ENCODE measurements at regions of chr9 and their contacts with region 1.

Region 1: GRCh38 chr9:73116031-73116430 is 35.6 kb upstream of the ANXA1 start:
- DNase-seq: peak; percentile 24
- ATAC-seq: peak; percentile 95
- H3K4me3 Mint-ChIP-seq: no peak overlapping the region
- H3K27ac Mint-ChIP-seq: peak overlapping the region; percentile 0
- H3K4me1 Mint-ChIP-seq: peaks cover 40% of the 10 kb centered on the region
- H3K27me3 Mint-ChIP-seq: no peaks in the 10 kb centered on the region
- CTCF ChIP-seq: no peak

Region 2: DNA sequence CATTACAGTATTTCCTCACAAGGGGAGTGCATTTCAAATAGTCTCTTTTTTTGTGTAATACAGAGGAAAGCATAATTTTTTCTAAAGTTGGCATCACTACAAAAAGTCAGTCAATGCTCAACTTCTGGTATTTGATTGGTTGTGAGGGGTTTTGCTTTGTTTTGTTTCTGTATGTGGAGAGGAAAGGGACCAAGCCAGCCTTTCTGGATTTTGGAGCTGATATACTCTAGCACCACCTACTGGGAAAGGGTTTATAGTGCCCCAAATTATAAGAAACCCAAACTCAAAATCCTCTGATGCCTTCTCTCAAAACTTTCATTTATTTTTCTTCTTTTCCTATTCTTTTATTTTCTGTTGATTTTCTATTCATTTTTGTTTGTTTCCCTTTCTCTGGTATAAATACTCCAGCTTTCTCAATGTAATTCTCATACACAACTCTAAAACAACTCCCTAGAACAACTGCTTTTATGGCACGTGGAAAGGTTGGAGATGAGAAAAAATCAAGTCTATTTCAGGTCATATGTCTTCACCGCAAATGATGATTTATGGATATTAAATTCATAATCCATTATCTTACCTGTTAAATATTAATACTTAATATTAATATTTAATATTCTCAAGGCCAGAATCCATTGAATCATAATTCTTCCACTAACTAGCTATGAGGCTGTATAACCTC is 33.9 kb before region 1 on chr9:
- CTCF ChIA-PET with region 1: no interaction called
- POLR2A ChIA-PET with region 1: no interaction called
- intact Hi-C with region 1: no loop called
- DNase-seq: peak; percentile 10
- ATAC-seq: peak; percentile 39
- H3K4me3 Mint-ChIP-seq: no peak overlapping the region
- H3K27ac Mint-ChIP-seq: no peak overlapping the region
- H3K4me1 Mint-ChIP-seq: no peaks in the 10 kb centered on the region
- H3K27me3 Mint-ChIP-seq: peaks cover 3% of the 10 kb centered on the region
- CTCF ChIP-seq: peak; percentile 71

Region 3: GRCh38 chr9:73132034-73132776 is 16.2 kb after region 1 on chr9:
- CTCF ChIA-PET with region 1: interaction called, 4 read pairs
- POLR2A ChIA-PET with region 1: interaction called, 3 read pairs
- intact Hi-C with region 1: loop called (anchors 2 kb)
- DNase-seq: peak; percentile 81
- ATAC-seq: peak; percentile 93
- H3K4me3 Mint-ChIP-seq: peak overlapping the region; percentile 78
- H3K27ac Mint-ChIP-seq: peak overlapping the region; percentile 93
- H3K4me1 Mint-ChIP-seq: peaks cover 37% of the 10 kb centered on the region
- H3K27me3 Mint-ChIP-seq: no peaks in the 10 kb centered on the region
- CTCF ChIP-seq: no peak

Region 4: DNA sequence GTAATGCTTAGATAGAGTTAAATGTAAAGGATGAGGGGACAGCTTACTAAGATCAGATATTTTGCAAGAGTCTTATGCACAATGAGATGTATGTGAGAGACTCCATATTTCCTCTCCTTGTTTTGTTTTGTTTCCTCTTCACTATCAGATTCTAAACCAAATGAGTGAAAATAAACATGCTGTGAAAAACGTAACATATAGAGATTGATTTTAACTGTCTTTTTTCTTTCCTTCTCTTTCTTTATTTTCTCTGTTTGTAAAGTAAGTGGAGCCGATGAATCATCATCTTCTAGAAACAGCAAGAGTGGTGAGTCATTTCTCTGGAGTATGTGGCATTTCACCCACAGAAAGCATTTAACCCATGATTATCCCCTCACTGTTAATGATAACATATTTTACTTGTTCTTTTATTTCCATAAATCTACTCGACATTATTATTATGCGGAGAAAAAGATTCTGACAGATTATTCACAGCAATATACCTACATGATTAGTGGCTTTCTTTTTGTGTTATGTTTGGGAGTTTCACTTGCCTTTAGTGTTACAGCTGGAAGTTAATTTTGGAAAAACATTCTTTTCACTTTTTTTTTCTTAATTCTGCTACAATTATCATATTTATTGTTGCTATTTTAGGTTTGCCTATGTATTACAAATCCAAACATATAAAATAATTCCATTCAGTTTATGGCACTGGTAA is 33.5 kb after region 1 on chr9:
- CTCF ChIA-PET with region 1: interaction called, 3 read pairs
- POLR2A ChIA-PET with region 1: interaction called, 3 read pairs
- intact Hi-C with region 1: loop called (anchors 1 kb)
- DNase-seq: peak; percentile 42
- ATAC-seq: peak; percentile 64
- H3K4me3 Mint-ChIP-seq: peak overlapping the region; percentile 50
- H3K27ac Mint-ChIP-seq: peak overlapping the region; percentile 94
- H3K4me1 Mint-ChIP-seq: peaks cover 71% of the 10 kb centered on the region
- H3K27me3 Mint-ChIP-seq: no peaks in the 10 kb centered on the region
- CTCF ChIP-seq: no peak

Measured in activated CD8-positive, alpha-beta T cell treated with anti-CD3 and anti-CD28 coated beads for 36 hours (primary cell).